ENCODE measurements at regions of chr1 and their contacts with region 1.

Region 1: GRCh38 chr1:222777977-222778376 is 36.9 kb upstream of the DISP1 start:
- DNase-seq: no peak
- H3K4me3 ChIP-seq: no peak overlapping the region
- CTCF ChIP-seq: no peak

Region 2: DNA sequence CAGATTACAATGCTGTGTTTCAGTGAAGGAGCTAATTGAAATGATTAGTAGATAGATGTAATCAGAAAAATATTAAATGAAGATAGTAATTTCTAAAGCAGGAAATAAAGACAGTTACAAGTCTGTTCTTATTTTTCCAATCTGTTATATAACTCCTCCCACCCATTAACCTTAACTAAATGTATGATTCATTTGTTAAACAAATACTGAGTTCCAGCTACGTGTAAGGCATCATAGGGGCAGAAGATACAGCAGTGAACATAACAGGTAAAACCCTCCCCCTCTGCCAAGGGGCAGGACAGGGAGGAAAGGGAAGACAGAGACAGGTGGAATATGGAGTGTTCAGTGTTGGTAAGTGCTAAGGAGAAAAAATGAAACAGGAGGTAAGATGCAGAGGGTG is 41.0 kb before region 1 on chr1 and contains the start of gene FAM177B:
- in situ Hi-C with region 1: loop called (anchors 5 kb)
- DNase-seq: no peak
- H3K4me3 ChIP-seq: no peak within 1 kb of the TSS
- CTCF ChIP-seq: no peak

Region 3: DNA sequence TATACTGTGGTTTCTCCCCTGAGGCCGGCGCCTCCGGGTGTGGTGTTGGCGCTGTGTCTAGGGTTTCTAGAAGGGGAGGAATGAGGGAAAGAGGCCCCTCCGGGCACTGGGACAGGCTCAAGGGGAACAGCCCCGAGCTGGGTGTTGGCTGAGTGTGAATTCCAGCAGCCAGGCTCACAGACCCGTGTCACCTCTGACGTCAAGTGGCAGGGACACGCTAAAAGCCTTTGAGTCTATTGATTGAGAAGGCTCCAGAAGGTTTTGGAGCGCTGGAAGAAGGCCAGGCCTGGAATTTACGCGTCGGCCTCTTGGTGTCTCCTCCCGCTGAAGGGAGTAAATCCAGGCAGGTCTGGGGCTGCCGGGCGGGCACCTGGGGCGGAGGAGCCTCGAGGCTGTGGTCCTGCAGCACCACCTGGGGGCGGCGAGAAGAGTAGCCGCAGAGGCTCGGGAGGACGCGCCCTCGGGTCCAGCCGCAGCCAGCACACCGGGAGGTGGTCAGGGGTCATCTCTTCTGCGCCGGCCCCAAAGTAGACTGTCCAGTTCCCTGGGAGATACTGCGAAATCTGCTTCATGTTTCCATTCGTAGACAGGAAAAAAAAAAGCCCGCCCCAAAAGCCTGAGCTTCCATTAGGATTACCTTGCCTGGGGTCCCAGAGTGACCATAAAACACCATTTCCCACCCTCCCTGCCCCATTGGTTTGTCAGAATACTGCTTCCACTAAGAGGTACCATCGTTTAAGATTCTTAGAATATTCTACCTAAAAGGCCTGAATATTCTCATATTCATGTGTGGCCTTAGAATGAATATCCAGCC is 303.4 kb after region 1 on chr1:
- in situ Hi-C with region 1: loop called (anchors 5 kb)
- DNase-seq: peak; percentile 82
- H3K4me3 ChIP-seq: peak overlapping the region; percentile 29
- CTCF ChIP-seq: peak; percentile 83

Measured in astrocyte of the cerebellum (primary cell).